ENCODE measurements at regions of chr12 and their contacts with region 1.

Region 1: GRCh38 chr12:16568873-16569272 is 37.1 kb downstream of the LMO3 start:
- DNase-seq: no peak
- ATAC-seq: no peak
- H3K4me3 ChIP-seq: no peak overlapping the region
- H3K4me3 Mint-ChIP-seq: no peak overlapping the region
- H3K27ac ChIP-seq: no peak overlapping the region
- H3K27ac Mint-ChIP-seq: no peak overlapping the region
- H3K4me1 ChIP-seq: no peaks in the 10 kb centered on the region
- H3K4me1 Mint-ChIP-seq: no peaks in the 10 kb centered on the region
- H3K27me3 ChIP-seq: no peaks in the 10 kb centered on the region
- H3K27me3 Mint-ChIP-seq: no peaks in the 10 kb centered on the region
- CTCF ChIP-seq: no peak

Region 2: DNA sequence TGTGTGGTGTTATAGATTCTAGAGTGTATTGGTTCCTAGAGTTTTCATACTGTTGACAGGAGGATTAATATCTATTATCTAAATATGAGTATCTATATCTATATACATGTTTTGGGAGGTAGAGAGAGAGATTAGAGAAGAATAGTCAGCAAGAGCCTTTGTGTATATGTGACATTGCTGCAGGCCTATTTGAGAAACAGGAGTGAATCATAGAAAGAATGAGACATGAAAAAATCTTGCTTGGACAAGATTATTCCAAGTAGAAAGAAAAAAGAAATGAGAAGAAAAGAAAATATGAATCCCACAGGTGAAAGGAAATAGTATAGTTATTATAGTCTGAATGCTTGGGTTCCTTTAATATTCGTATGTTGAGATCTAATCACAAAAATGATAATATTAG is 800.7 kb after region 1 on chr12:
- CTCF ChIA-PET with region 1: no interaction called
- POLR2A ChIA-PET with region 1: no interaction called
- intact Hi-C with region 1: loop called in 1 of 2 experiments (anchors 5 kb)
- DNase-seq: no peak
- ATAC-seq: no peak
- H3K4me3 ChIP-seq: no peak overlapping the region
- H3K4me3 Mint-ChIP-seq: no peak overlapping the region
- H3K27ac ChIP-seq: no peak overlapping the region
- H3K27ac Mint-ChIP-seq: no peak overlapping the region
- H3K4me1 ChIP-seq: no peaks in the 10 kb centered on the region
- H3K4me1 Mint-ChIP-seq: no peaks in the 10 kb centered on the region
- H3K27me3 ChIP-seq: no peaks in the 10 kb centered on the region
- H3K27me3 Mint-ChIP-seq: no peaks in the 10 kb centered on the region
- CTCF ChIP-seq: no peak

Measured in CD8-positive, alpha-beta T cell (primary cell).